ENCODE measurements at regions of chr3 and their contacts with region 1.

Region 1: DNA sequence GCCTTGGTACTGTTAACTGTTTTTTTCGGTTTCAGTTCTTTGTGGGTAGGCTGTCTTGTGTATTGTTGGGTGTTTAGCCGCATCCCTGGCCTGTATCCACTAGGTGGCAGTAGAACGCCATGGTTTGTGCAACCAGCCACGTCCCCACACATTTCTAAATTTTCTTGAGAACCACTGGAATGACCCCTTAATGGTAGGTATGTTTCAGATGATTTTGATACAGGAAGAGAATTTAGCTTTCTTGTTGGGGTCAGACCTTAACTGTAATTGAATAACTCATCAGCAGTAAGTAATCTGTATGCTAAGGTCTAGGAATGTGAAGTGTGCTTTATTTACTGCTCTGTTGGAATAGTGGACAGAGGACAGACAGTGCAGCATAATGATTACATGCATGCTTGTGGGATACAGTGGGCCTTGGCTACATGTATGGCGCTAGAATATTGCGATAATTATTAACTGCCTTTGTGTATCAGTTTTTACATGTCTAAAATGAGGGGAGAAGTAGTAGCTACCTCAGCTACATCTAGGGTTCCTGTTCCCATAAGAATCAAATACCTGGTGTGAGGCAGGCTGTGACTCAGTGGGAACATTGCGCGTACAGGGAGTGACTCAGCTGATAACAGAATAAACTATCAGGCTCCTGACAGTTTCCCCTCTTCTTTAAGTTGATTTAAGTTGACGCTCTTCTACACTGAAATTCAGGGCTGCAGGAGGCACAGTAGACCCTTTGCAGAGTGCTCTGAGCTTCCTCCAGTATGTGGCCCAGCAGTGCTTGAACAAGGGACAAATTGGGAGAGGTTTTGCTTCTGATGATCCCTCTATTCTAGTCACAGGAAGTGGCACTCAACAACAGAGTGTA is 25.0 kb upstream of the GPR171 start:
- DNase-seq: peak; percentile 84
- H3K4me3 Mint-ChIP-seq: no peak overlapping the region
- H3K27ac Mint-ChIP-seq: no peak overlapping the region
- H3K4me1 Mint-ChIP-seq: peaks cover 18% of the 10 kb centered on the region
- H3K27me3 Mint-ChIP-seq: no peaks in the 10 kb centered on the region
- CTCF ChIP-seq: peak; percentile 81

Region 2: GRCh38 chr3:151175952-151176351 is 52.1 kb before region 1 on chr3:
- CTCF ChIA-PET with region 1: interaction called, 11 read pairs
- POLR2A ChIA-PET with region 1: no interaction called
- intact Hi-C with region 1: no loop called
- DNase-seq: no peak
- H3K4me3 Mint-ChIP-seq: no peak overlapping the region
- H3K27ac Mint-ChIP-seq: no peak overlapping the region
- H3K4me1 Mint-ChIP-seq: no peaks in the 10 kb centered on the region
- H3K27me3 Mint-ChIP-seq: no peaks in the 10 kb centered on the region
- CTCF ChIP-seq: no peak

Region 3: DNA sequence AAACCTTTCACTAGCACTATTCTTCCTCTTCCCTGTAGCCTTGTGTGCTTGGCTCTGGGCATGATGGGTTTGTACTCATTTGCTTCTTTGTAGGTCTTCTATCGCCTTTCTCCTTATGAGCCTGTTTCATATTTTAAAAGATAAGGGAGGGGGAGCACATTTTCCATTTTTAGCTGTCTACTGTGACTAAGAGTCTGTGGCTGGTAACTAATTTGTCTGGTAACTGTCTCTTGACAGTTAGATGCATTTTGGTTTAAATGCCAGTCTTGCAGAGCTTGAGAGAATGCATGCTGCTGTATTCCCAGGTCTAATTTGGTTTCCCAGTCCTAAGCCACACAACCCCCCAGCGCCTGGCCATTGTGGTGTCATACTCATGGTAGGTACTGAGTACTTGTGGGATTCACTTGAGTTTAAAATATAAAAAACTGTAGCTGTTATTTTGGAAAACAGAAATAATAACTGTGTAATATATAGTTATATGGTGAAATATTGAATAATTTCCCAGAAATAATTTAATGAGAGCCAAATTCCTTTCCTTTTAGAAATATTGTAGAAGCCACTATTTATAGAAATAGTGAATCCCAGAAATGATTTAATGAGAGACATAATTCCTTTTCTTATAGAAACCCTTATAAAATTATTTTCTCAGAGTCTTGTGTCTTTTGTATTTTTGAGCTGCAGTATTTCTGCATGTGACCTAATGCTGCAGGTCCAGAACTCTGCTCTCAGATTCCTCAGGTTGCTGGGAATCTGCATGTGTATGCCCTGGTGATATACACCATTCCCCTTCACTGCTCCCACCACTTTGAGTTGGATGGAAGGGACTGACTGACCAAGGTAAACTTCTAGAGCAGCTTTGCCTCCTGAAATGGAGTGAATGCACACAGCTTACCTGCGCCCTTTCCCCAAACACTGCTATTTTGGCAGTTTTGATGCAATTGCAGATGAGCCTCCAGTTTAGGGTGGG is 11.1 kb before region 1 on chr3:
- CTCF ChIA-PET with region 1: interaction called, 14 read pairs
- POLR2A ChIA-PET with region 1: interaction called, 4 read pairs
- intact Hi-C with region 1: no loop called
- DNase-seq: no peak
- H3K4me3 Mint-ChIP-seq: no peak overlapping the region
- H3K27ac Mint-ChIP-seq: no peak overlapping the region
- H3K4me1 Mint-ChIP-seq: peaks cover 8% of the 10 kb centered on the region
- H3K27me3 Mint-ChIP-seq: no peaks in the 10 kb centered on the region
- CTCF ChIP-seq: no peak

Region 4: DNA sequence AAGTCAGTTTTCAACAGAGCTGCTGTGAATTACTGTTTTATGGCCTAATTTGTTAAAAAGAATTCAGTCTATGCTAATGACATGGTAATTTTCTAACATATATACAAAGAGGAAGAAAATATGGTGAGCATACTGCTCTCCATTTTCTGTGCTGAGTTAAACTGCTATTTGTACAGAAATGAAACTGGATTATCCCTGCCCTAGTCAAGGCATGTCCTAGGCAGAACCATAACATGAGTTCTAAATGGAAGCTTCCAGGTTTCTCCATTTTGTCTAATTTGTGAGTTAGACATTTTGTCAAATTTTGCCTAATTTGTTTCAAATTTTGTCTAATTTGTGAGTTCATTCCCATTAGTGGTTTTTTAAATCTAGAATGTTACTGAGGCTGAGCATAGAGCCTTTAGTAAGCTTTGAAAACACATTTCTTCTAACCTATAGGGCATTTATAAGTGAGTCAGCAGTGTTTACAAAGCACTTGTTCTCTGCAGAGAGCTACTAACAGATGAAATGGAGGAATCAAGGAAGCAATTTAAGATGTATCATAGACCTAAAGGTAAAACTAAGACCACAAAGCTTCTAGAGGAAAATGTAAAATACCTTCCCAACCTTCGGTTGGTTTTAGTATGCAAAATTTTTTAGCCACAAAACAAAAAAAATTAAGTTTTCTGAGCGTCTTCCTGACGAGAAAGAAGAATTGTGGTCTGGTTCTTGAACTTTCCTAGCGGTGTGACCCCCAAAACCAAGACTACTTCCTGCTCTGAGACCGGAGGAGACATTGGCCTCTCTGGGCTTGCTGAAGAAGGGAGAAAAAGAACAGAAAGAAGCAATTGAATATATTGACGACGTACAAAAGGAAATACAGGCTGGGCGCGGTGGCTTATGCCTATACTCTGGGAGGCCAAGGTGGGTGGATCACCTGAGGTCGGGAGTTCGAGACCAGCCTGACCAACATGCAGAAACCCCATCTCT is 40.5 kb after region 1 on chr3:
- CTCF ChIA-PET with region 1: interaction called, 18 read pairs
- POLR2A ChIA-PET with region 1: no interaction called
- intact Hi-C with region 1: no loop called
- DNase-seq: no peak
- H3K4me3 Mint-ChIP-seq: no peak overlapping the region
- H3K27ac Mint-ChIP-seq: no peak overlapping the region
- H3K4me1 Mint-ChIP-seq: no peaks in the 10 kb centered on the region
- H3K27me3 Mint-ChIP-seq: no peaks in the 10 kb centered on the region
- CTCF ChIP-seq: no peak

Region 5: GRCh38 chr3:151327571-151328198 is 99.6 kb after region 1 on chr3:
- CTCF ChIA-PET with region 1: interaction called, 15 read pairs
- POLR2A ChIA-PET with region 1: no interaction called
- intact Hi-C with region 1: loop called (anchors 1 kb)
- DNase-seq: peak; percentile 36
- H3K4me3 Mint-ChIP-seq: no peak overlapping the region
- H3K27ac Mint-ChIP-seq: no peak overlapping the region
- H3K4me1 Mint-ChIP-seq: peaks cover 8% of the 10 kb centered on the region
- H3K27me3 Mint-ChIP-seq: no peaks in the 10 kb centered on the region
- CTCF ChIP-seq: peak; percentile 52

Region 6: GRCh38 chr3:151491525-151491924 is 263.5 kb after region 1 on chr3:
- CTCF ChIA-PET with region 1: no interaction called
- POLR2A ChIA-PET with region 1: no interaction called
- intact Hi-C with region 1: no loop called
- DNase-seq: no peak
- H3K4me3 Mint-ChIP-seq: no peak overlapping the region
- H3K27ac Mint-ChIP-seq: no peak overlapping the region
- H3K4me1 Mint-ChIP-seq: no peaks in the 10 kb centered on the region
- H3K27me3 Mint-ChIP-seq: no peaks in the 10 kb centered on the region
- CTCF ChIP-seq: no peak

Region 7: DNA sequence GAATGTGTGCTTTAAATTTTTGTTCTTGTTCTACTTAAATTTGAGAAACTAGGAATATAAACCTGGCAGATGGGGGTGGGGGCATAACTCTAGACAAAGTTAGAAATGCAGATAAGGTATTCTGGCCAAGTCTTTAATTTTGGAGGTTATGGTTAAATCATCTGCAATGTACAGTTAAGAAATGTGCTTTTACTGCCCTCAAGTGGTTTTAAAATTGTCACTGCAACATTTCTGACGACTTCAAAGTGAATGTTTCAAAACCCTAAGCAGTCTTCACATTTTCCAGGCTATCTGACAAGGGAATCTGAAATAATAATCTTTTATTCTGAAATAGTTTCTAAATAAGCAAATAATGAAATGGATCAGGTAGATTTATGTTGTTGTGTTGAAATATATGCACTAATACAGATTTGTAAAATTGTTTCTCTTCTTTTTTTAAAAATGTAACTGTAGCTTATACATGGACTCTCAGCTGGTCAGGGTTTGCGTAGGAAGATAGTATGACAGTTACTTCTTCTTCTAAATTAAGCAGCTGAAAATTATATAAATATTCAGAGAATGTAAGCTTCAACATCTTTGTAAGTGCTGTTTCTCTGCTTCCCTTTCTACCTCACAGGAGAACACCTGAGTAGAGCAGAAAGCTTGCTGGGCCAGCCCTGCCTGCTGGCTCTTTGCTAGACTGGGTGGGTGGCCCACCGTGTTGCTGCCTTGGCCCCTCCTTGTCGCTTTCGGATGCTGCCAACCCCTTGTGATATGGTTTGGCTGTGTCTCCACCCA is 690.4 kb after region 1 on chr3:
- CTCF ChIA-PET with region 1: interaction called, 7 read pairs
- POLR2A ChIA-PET with region 1: no interaction called
- intact Hi-C with region 1: loop called (anchors 5 kb)
- DNase-seq: peak; percentile 50
- H3K4me3 Mint-ChIP-seq: no peak overlapping the region
- H3K27ac Mint-ChIP-seq: no peak overlapping the region
- H3K4me1 Mint-ChIP-seq: no peaks in the 10 kb centered on the region
- H3K27me3 Mint-ChIP-seq: no peaks in the 10 kb centered on the region
- CTCF ChIP-seq: peak; percentile 70

Measured in MCF 10A (cell line).